ENCODE measurements at regions of chr12 and their contacts with region 1.

Region 1: GRCh38 chr12:12081836-12082497 is 11.2 kb downstream of the BCL2L14 start:
- DNase-seq: peak; percentile 78
- H3K4me3 ChIP-seq: no peak overlapping the region
- H3K27ac ChIP-seq: peak overlapping the region; percentile 72 to 83 (median 78)
- H3K4me1 ChIP-seq: peaks cover 0 to 26% (median 12%) of the 10 kb centered on the region in 4 donors
- H3K27me3 ChIP-seq: no peaks in the 10 kb centered on the region
- CTCF ChIP-seq: peak in 2 of 5 experiments; percentile 5 to 10
- EP300 ChIP-seq: no peak
- POLR2A ChIP-seq: no peak

Region 2: GRCh38 chr12:12327802-12328201 is 245.8 kb after region 1 on chr12:
- in situ Hi-C with region 1: loop called (anchors 10 to 25 kb)
- intact Hi-C with region 1: no loop called
- DNase-seq: no peak
- H3K4me3 ChIP-seq: no peak overlapping the region
- H3K27ac ChIP-seq: no peak overlapping the region
- H3K4me1 ChIP-seq: peaks cover 4 to 24% (median 12%) of the 10 kb centered on the region in 4 donors
- H3K27me3 ChIP-seq: no peaks in the 10 kb centered on the region
- CTCF ChIP-seq: peak; percentile 62 to 74 (median 66)
- EP300 ChIP-seq: no peak
- POLR2A ChIP-seq: no peak

Region 3: DNA sequence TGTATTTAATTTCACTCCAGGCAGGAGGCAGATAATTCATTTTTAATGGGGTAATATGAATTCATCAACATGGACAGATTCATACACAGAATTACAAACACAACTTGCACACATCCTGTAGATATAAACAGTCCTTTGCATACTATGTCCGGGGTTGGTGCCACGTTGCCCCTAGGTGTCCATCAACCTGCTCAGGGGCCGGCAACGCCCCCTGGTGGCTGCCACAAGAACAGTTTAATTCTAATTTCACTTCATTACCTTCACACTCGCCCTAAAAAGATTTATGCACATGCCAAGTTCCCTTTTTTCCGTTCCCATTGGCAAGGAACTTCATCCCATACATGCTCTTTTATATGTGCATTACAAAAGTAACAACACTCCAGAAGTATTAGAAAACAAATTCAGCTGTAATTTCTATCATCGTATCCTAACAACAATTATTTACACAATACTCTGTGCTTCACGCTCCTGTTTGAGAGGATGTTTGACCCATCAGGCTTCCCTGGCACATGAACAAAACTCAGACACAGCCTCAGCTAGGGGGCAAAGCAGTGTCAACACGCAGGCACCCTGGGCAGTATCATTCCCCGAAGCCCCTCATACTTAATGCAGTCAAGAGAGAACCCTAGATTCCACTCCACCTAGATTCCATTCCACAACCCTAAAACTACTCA is 252.5 kb after region 1 on chr12:
- in situ Hi-C with region 1: loop called (anchors 10 to 25 kb)
- intact Hi-C with region 1: loop called (anchors 5 kb)
- DNase-seq: peak; percentile 64
- H3K4me3 ChIP-seq: no peak overlapping the region
- H3K27ac ChIP-seq: peak overlapping the region; percentile 52 to 78 (median 60)
- H3K4me1 ChIP-seq: peaks cover 9 to 38% (median 27%) of the 10 kb centered on the region in 4 donors
- H3K27me3 ChIP-seq: no peaks in the 10 kb centered on the region
- CTCF ChIP-seq: peak; percentile 82 to 93 (median 86)
- EP300 ChIP-seq: no peak
- POLR2A ChIP-seq: no peak

Measured in transverse colon (tissue), 4 donors.